ENCODE measurements at regions of chr20 and their contacts with region 1.

Region 1: DNA sequence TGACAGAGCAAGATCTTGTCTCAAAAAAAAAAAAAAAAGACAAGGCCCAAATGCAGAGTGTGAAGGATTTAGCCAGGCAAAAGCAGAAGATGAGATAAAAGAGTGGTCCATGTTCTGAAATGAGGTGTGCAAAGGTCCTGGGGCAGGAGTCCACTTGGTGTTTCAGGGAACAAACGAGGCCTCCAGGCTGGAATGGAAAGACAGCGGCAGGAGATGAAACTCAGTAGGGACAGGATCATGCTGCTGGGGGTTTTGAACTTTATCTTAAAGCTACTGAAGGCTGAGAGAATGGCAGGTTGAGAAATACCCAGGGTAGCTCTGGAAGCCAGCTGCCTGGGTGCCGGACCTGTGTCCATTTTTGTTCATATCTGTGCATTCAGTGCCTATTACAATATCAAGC is 178.2 kb downstream of the ZMYND8 start:
- DNase-seq: no peak
- H3K4me3 ChIP-seq: no peak overlapping the region
- H3K27ac ChIP-seq: no peak overlapping the region
- H3K4me1 ChIP-seq: no peaks in the 10 kb centered on the region
- H3K27me3 ChIP-seq: no peaks in the 10 kb centered on the region
- CTCF ChIP-seq: no peak
- POLR2A ChIP-seq: no peak

Region 2: GRCh38 chr20:47157820-47158723 is 20.2 kb before region 1 on chr20:
- intact Hi-C with region 1: loop called (anchors 2 kb)
- DNase-seq: no peak
- H3K4me3 ChIP-seq: no peak overlapping the region
- H3K27ac ChIP-seq: no peak overlapping the region
- H3K4me1 ChIP-seq: no peaks in the 10 kb centered on the region
- H3K27me3 ChIP-seq: no peaks in the 10 kb centered on the region
- CTCF ChIP-seq: no peak
- POLR2A ChIP-seq: no peak

Region 3: GRCh38 chr20:47220161-47220582 is 41.9 kb after region 1 on chr20:
- intact Hi-C with region 1: no loop called
- DNase-seq: no peak
- H3K4me3 ChIP-seq: no peak overlapping the region
- H3K27ac ChIP-seq: no peak overlapping the region
- H3K4me1 ChIP-seq: no peaks in the 10 kb centered on the region
- H3K27me3 ChIP-seq: no peaks in the 10 kb centered on the region
- CTCF ChIP-seq: peak; percentile 24 to 46 (median 29)
- POLR2A ChIP-seq: no peak

Region 4: GRCh38 chr20:47432211-47433210 is 254.2 kb after region 1 on chr20:
- intact Hi-C with region 1: no loop called
- DNase-seq: no peak
- H3K4me3 ChIP-seq: no peak overlapping the region
- H3K27ac ChIP-seq: no peak overlapping the region
- H3K4me1 ChIP-seq: no peaks in the 10 kb centered on the region
- H3K27me3 ChIP-seq: no peaks in the 10 kb centered on the region
- CTCF ChIP-seq: no peak
- POLR2A ChIP-seq: no peak